A673 (cell line): ENCODE measurements at regions of chr4 and their contacts with region 1.

Region 1: GRCh38 chr4:98928505-98929340 is at the start of gene EIF4E:
- DNase-seq: peak; percentile 99
- H3K4me3 ChIP-seq: peak within 1 kb of the TSS; percentile 91
- H3K27ac ChIP-seq: peak within 1 kb of the TSS; percentile 92
- H3K4me1 ChIP-seq: peaks cover 7% of the 10 kb centered on the region
- H3K27me3 ChIP-seq: no peaks in the 10 kb centered on the region
- CTCF ChIP-seq: 0 out of 2 replicates have a peak, but pooled peaks have one; percentile 37
- total RNA-seq, gene EIF4E: 154 and 179 TPM in 2 replicates

Region 2: DNA sequence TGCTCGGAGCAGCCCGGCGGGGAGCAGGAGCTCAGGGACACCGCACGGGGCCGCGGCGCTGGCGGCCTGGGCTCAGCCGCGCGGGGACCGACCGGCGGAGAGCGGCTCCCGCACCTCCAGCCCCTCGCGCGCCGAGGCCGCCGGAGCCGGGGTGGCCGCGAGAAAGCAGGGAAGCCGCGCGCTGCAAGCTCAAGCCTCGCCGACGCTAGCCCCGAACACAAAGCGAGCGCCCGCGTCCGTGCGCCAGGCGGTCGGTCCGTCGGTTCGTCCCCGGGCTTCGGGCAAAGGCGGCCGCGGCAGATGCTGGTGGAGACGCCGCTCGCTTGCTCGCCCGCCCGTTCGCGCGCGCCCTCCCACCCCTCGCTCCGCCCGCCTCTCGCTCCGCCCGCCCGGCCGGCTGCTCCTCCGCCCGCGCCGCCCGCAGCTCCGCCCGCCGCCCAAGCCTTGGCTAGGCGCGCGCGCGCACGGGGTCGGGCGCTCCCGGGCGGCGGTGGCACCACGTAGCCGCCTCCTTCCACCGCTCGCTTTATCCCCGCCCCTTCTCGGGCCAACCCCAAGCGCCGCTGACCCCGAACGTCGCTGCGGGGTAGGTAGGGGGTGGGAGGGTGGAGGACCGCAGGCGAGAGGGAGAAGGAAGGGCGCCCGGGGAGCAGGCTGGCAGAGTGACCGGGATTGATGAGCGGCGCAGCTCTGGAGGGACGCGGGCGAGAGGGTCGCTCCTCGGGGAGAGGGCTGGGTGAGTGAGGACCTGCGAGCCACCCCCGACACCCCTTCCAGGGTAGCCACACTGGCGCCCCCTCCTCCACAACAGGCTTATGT is 270.2 kb before region 1 on chr4 and contains the start of gene TSPAN5:
- CTCF ChIA-PET with region 1: no interaction called
- POLR2A ChIA-PET with region 1: no interaction called
- intact Hi-C with region 1: loop called (anchors 5 kb)
- DNase-seq: peak; percentile 88
- H3K4me3 ChIP-seq: peak within 1 kb of the TSS; percentile 67
- H3K27ac ChIP-seq: peak within 1 kb of the TSS; percentile 41
- H3K4me1 ChIP-seq: no peaks in the 10 kb centered on the region
- H3K27me3 ChIP-seq: no peaks in the 10 kb centered on the region
- CTCF ChIP-seq: no peak
- total RNA-seq, gene TSPAN5: 15.2 and 16.9 TPM in 2 replicates

Region 3: GRCh38 chr4:98745366-98745765 is 183.4 kb before region 1 on chr4:
- CTCF ChIA-PET with region 1: no interaction called
- POLR2A ChIA-PET with region 1: no interaction called
- intact Hi-C with region 1: loop called (anchors 5 kb)
- DNase-seq: peak; percentile 46
- H3K4me3 ChIP-seq: no peak overlapping the region
- H3K27ac ChIP-seq: no peak overlapping the region
- H3K4me1 ChIP-seq: peaks cover 46% of the 10 kb centered on the region
- H3K27me3 ChIP-seq: no peaks in the 10 kb centered on the region
- CTCF ChIP-seq: peak; percentile 67

Region 4: DNA sequence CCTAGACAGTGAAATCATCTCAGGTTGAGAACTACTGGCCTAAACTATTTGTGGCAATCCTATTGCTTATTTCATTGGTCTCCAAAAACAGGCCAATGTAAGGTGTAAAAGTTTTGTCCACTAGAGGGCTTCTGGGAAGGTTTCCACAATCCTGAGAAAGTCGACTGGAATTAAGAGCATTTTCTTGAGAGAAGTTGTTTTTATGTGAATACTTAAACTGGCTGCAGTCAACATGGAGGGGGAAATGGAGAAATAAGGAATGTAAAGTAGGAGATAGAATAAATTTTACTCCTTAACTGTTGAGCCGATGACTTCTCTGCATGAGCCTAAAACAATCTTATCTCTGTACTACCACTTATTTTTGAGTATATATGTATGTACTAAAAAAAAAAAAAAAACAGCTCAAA is 11.2 kb after region 1 on chr4:
- CTCF ChIA-PET with region 1: interaction called, 14 read pairs
- POLR2A ChIA-PET with region 1: no interaction called
- intact Hi-C with region 1: no loop called
- DNase-seq: peak; percentile 81
- H3K4me3 ChIP-seq: no peak overlapping the region
- H3K27ac ChIP-seq: no peak overlapping the region
- H3K4me1 ChIP-seq: peaks cover 4% of the 10 kb centered on the region
- H3K27me3 ChIP-seq: no peaks in the 10 kb centered on the region
- CTCF ChIP-seq: peak; percentile 81

Region 5: GRCh38 chr4:98995183-98996055 is 66.7 kb after region 1 on chr4 and contains the start of gene METAP1:
- CTCF ChIA-PET with region 1: interaction called, 13 read pairs
- POLR2A ChIA-PET with region 1: no interaction called
- intact Hi-C with region 1: loop called (anchors 2 kb)
- DNase-seq: peak; percentile 97
- H3K4me3 ChIP-seq: peak within 1 kb of the TSS; percentile 84
- H3K27ac ChIP-seq: peak within 1 kb of the TSS; percentile 83
- H3K4me1 ChIP-seq: no peaks in the 10 kb centered on the region
- H3K27me3 ChIP-seq: no peaks in the 10 kb centered on the region
- CTCF ChIP-seq: peak; percentile 70
- total RNA-seq, gene METAP1: 72.2 and 81.3 TPM in 2 replicates